ENCODE measurements at regions of chr2 and their contacts with region 1.

Region 1: DNA sequence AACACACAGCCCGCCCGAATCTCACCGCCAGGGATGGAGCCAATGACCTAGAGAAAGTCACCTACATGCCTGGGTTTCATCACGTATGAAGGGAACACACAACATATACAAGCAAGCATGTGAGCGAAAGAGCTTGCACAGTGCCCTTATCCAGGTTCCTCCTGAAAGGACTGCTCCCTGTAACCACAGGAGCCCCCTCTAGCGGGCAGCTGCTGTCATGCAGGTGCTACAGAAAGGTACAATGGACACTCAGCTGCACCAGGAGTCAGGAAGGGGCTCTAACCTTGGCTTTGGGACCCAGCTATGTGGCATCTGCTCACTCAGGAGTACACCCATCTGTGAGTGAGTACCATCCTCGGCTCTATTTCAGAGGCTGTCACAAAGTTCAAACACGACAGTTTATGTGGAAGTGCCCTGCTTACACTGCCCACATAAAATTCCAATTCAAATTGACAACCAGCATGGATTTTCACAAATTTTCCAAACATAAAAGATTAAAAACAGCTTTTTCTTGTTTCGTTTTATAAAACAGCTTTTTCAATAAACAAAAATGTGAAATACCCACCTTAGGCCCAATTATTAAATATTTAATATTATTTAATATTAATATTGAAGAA is 3.5 kb downstream of the NDUFA10 start:
- DNase-seq: peak; percentile 69 to 90
- H3K4me3 ChIP-seq: no peak overlapping the region; a peak in 1 of 8 replicates
- H3K27ac ChIP-seq: no peak overlapping the region
- H3K4me1 ChIP-seq: 0 out of 7 replicates have a peak, but pooled peaks cover 0 to 6% (median 0%) of the 10 kb centered on the region in 4 experiments
- H3K27me3 ChIP-seq: no peaks in the 10 kb centered on the region
- CTCF ChIP-seq: peak; percentile 83 to 98 (median 90)
- EP300 ChIP-seq: no peak
- POLR2A ChIP-seq: no peak
- RAD21 ChIP-seq: peak; percentile 46 to 61; a peak in 3 of 4 replicates

Region 2: GRCh38 chr2:240000686-240001085 is 20.9 kb before region 1 on chr2:
- CTCF ChIA-PET with region 1: interaction called, 13 read pairs
- POLR2A ChIA-PET with region 1: no interaction called
- DNase-seq: no peak
- H3K4me3 ChIP-seq: no peak overlapping the region
- H3K27ac ChIP-seq: no peak overlapping the region
- H3K4me1 ChIP-seq: peaks cover 0 to 4% (median 0%) of the 10 kb centered on the region in 4 experiments; a peak in 1 of 7 replicates
- H3K27me3 ChIP-seq: no peaks in the 10 kb centered on the region
- CTCF ChIP-seq: no peak
- EP300 ChIP-seq: no peak
- POLR2A ChIP-seq: no peak
- RAD21 ChIP-seq: no peak

Measured in H1 (cell line).